GM12878 (cell line): ENCODE measurements at regions of chr1 and their contacts with region 1.

Region 1: GRCh38 chr1:220222939-220223338 is 49.3 kb downstream of the RAB3GAP2 start:
- DNase-seq: no peak
- ATAC-seq: peak; percentile 35
- H3K4me3 ChIP-seq: no peak overlapping the region
- H3K27ac ChIP-seq: peak overlapping the region; percentile 96; the same call in 1 of the 2 replicates
- H3K4me1 ChIP-seq: peaks cover 17% of the 10 kb centered on the region
- H3K27me3 ChIP-seq: no peaks in the 10 kb centered on the region
- CTCF ChIP-seq: no peak
- EP300 ChIP-seq: no peak
- POLR2A ChIP-seq: no peak
- RAD21 ChIP-seq: no peak

Region 2: DNA sequence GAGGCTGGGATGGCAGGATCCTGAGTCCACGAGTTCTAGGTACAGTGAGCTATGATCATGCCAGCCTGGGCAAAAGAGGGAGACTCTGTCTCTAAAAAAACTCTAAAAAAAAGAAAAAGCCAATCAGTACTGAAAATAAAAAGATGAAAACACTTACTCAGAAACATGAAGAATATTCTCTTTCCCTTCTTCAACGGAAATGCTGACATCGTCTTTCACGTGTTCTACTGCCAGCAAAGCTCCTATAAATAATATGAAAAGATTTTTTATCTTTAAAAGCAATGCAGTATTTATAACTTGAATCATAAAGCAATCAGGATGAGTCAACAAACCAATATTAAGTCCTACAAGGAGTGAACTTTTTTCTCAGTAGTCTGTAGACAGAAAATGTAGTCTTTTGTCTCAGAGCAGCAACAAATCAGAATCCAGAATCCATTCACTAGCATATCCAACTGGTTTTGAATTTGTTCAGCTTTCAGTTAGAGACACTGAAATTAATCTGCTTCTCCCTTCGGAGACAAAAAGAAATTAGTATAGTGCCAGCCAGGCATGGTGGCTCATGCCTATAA is 182.8 kb before region 1 on chr1:
- CTCF ChIA-PET with region 1: no interaction called
- POLR2A ChIA-PET with region 1: no interaction called
- RAD21 ChIA-PET with region 1: no interaction called
- SMC1A ChIA-PET with region 1: no interaction called
- in situ Hi-C with region 1: no loop called
- intact Hi-C with region 1: no loop called
- DNase-seq: no peak
- ATAC-seq: no peak
- H3K4me3 ChIP-seq: no peak overlapping the region
- H3K27ac ChIP-seq: no peak overlapping the region
- H3K4me1 ChIP-seq: peaks cover 5% of the 10 kb centered on the region; the same call in 1 of the 2 replicates
- H3K27me3 ChIP-seq: no peaks in the 10 kb centered on the region
- CTCF ChIP-seq: no peak
- EP300 ChIP-seq: no peak
- POLR2A ChIP-seq: no peak
- RAD21 ChIP-seq: no peak

Region 3: DNA sequence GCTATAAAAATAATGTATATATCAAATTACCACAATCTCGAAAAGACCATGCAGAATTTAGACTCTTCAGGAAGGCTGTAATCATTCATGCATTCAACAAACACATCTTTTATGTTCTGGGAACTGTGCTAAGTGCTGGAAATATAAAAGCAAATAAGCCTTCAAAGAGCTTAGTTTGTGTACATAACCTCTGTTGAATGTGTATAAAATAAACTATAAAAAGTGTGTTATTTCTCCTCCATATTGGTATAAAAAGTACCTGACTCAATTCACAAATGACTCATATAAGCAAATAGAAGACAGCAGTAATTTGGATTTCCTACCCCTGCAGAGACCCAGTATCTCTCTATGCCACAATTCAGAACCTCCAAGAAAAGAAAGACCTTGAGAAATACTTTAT is 12.5 kb after region 1 on chr1:
- CTCF ChIA-PET with region 1: interaction called, 35 read pairs
- POLR2A ChIA-PET with region 1: interaction called, 18 read pairs
- RAD21 ChIA-PET with region 1: interaction called, 31 read pairs
- SMC1A ChIA-PET with region 1: interaction called, 57 read pairs
- in situ Hi-C with region 1: no loop called
- intact Hi-C with region 1: no loop called
- DNase-seq: no peak
- ATAC-seq: no peak
- H3K4me3 ChIP-seq: no peak overlapping the region
- H3K27ac ChIP-seq: no peak overlapping the region
- H3K4me1 ChIP-seq: no peaks in the 10 kb centered on the region
- H3K27me3 ChIP-seq: no peaks in the 10 kb centered on the region
- CTCF ChIP-seq: no peak
- EP300 ChIP-seq: no peak
- POLR2A ChIP-seq: no peak
- RAD21 ChIP-seq: no peak

Region 4: GRCh38 chr1:220272047-220272840 is 49.3 kb after region 1 on chr1 and contains the start of gene RAB3GAP2:
- CTCF ChIA-PET with region 1: interaction called, 43 read pairs
- POLR2A ChIA-PET with region 1: interaction called, 55 read pairs
- RAD21 ChIA-PET with region 1: interaction called, 189 read pairs
- SMC1A ChIA-PET with region 1: interaction called, 250 read pairs
- in situ Hi-C with region 1: no loop called
- intact Hi-C with region 1: loop called (anchors 1 kb)
- DNase-seq: peak; percentile 89
- ATAC-seq: peak; percentile 95
- H3K4me3 ChIP-seq: peak within 1 kb of the TSS; percentile 96
- H3K27ac ChIP-seq: peak within 1 kb of the TSS; percentile 93
- H3K4me1 ChIP-seq: peaks cover 5% of the 10 kb centered on the region; the same call in 1 of the 2 replicates
- H3K27me3 ChIP-seq: no peaks in the 10 kb centered on the region
- CTCF ChIP-seq: no peak
- EP300 ChIP-seq: peak in 1 of 2 experiments; percentile 53; a peak in 1 of 4 replicates
- POLR2A ChIP-seq: peak; percentile 97
- RAD21 ChIP-seq: no peak
- polyA plus RNA-seq, gene RAB3GAP2: 11.9 to 15.6 TPM

Region 5: GRCh38 chr1:220767312-220768125 is 544.6 kb after region 1 on chr1:
- CTCF ChIA-PET with region 1: interaction called, 22 read pairs
- POLR2A ChIA-PET with region 1: interaction called, 10 read pairs
- RAD21 ChIA-PET with region 1: interaction called, 33 read pairs
- SMC1A ChIA-PET with region 1: interaction called, 8 read pairs
- in situ Hi-C with region 1: no loop called
- intact Hi-C with region 1: no loop called
- DNase-seq: no peak
- ATAC-seq: no peak
- H3K4me3 ChIP-seq: no peak overlapping the region
- H3K27ac ChIP-seq: no peak overlapping the region
- H3K4me1 ChIP-seq: no peaks in the 10 kb centered on the region; the same call in none of the 2 replicates
- H3K27me3 ChIP-seq: no peaks in the 10 kb centered on the region
- CTCF ChIP-seq: no peak
- EP300 ChIP-seq: no peak
- POLR2A ChIP-seq: no peak
- RAD21 ChIP-seq: no peak

Region 6: DNA sequence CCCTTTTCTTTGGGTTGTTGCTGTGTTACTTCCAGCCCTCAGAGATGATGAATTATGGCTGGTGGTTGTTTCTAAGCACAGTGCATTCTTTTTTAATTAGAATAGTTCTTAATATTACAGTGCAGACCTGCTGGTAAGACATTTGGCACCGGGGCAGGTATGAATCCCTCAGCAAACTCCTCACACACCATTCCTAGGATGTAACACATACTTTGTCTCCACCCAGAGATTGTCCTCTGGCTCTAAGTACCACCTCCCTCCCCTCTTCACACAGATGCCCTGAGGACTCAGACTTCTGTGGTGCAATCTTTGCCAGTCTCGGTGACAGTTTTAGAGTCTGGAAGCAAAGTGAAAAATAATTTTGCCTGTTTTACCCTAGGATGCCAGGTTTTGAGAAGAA is 799.4 kb after region 1 on chr1:
- CTCF ChIA-PET with region 1: no interaction called
- POLR2A ChIA-PET with region 1: no interaction called
- RAD21 ChIA-PET with region 1: no interaction called
- SMC1A ChIA-PET with region 1: no interaction called
- in situ Hi-C with region 1: no loop called
- intact Hi-C with region 1: no loop called
- DNase-seq: no peak
- ATAC-seq: no peak
- H3K4me3 ChIP-seq: no peak overlapping the region
- H3K27ac ChIP-seq: no peak overlapping the region
- H3K4me1 ChIP-seq: no peaks in the 10 kb centered on the region
- H3K27me3 ChIP-seq: no peaks in the 10 kb centered on the region; a peak in 1 of 4 replicates
- CTCF ChIP-seq: no peak
- EP300 ChIP-seq: no peak
- POLR2A ChIP-seq: no peak
- RAD21 ChIP-seq: no peak